Heart left ventricle (tissue), 16 donors: ENCODE measurements at regions of chr18 and their contacts with region 1.

Region 1: DNA sequence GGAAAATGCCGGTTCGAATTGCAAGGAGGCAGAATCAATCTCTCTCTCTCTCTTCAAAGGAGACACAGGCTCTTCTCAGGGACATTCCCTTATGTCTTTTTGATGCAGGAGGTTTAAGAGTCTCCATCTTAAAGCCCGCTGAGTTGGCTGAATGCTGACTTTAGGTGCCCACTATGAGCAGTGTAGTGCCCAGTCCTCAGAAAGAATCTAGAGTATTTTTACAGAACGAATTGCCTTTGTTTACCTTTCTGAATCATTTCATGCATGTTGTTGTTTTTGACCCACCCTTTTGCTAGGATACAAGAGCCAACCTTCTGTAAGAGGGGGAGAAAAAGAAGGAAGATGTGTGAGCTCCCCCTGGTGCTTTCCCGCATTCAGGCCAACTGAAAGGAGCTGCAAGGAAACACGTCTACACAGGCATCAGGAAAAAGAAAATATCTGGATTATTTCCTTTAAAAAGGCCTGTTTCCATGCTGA is 193.5 kb upstream of the TCF4 start:
- DNase-seq: peak in 4 of 5 donors; percentile 33 to 58 (median 48)
- ATAC-seq: peak in 3 of 4 donors; percentile 65 to 75 (median 75)
- H3K4me3 ChIP-seq: no peak overlapping the region
- H3K27ac ChIP-seq: peak overlapping the region; percentile 48 to 95 (median 88)
- H3K4me1 ChIP-seq: peaks cover 0 to 30% (median 20%) of the 10 kb centered on the region in 12 donors
- H3K27me3 ChIP-seq: peaks cover 0 to 3% (median 0%) of the 10 kb centered on the region in 9 donors
- CTCF ChIP-seq: peak; percentile 31 to 75 (median 68)
- POLR2A ChIP-seq: no peak

Region 2: GRCh38 chr18:55234366-55235093 is 547.0 kb before region 1 on chr18:
- intact Hi-C with region 1: loop called in 8 of 10 experiments (anchors 2 to 10 kb)
- DNase-seq: peak; percentile 67 to 79 (median 75)
- ATAC-seq: peak; percentile 76 to 92 (median 88)
- H3K4me3 ChIP-seq: no peak overlapping the region
- H3K27ac ChIP-seq: peak overlapping the region in 11 of 12 donors; percentile 47 to 77 (median 62)
- H3K4me1 ChIP-seq: peaks cover 0 to 55% (median 37%) of the 10 kb centered on the region in 12 donors
- H3K27me3 ChIP-seq: no peaks in the 10 kb centered on the region
- CTCF ChIP-seq: peak; percentile 60 to 87 (median 79)
- POLR2A ChIP-seq: no peak

Region 3: DNA sequence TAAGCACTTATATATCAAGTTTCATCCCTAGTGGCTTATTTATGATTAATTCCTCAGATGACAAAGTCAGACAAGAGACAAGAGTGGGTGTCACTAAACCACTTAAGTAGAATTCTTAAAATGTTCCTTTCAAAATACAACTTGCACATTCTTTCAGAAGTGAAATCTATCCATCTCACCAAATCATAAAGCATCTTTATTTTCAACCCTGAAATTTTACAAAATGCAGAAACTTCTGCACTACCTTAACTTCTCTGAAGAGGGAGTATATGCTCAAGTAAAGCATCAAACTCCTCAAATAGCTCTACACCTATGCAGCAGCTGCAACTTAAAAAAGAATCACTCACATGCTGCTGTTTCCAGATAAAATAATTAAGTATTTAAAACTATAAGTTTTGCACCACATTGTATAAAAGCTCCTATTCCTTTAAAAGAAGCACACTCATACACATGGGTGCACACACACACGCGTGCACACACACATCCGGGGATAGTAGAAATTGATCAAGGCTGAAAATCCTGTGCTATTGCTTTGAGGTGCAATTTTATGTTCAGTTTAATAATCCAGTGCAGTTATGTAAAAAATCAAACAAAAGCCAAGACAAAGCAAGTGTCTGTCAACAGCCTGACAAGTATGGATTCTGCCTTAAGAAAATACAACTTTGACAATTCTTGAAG is 438.0 kb before region 1 on chr18:
- intact Hi-C with region 1: loop called in 8 of 10 experiments (anchors 2 to 10 kb)
- DNase-seq: no peak
- ATAC-seq: peak in 3 of 4 donors; percentile 56 to 64 (median 57)
- H3K4me3 ChIP-seq: no peak overlapping the region
- H3K27ac ChIP-seq: peak overlapping the region in 2 of 12 donors; percentile 4 to 21
- H3K4me1 ChIP-seq: peaks cover 0 to 61% (median 17%) of the 10 kb centered on the region in 12 donors
- H3K27me3 ChIP-seq: no peaks in the 10 kb centered on the region
- CTCF ChIP-seq: peak; percentile 38 to 74 (median 58)
- POLR2A ChIP-seq: no peak

Region 4: DNA sequence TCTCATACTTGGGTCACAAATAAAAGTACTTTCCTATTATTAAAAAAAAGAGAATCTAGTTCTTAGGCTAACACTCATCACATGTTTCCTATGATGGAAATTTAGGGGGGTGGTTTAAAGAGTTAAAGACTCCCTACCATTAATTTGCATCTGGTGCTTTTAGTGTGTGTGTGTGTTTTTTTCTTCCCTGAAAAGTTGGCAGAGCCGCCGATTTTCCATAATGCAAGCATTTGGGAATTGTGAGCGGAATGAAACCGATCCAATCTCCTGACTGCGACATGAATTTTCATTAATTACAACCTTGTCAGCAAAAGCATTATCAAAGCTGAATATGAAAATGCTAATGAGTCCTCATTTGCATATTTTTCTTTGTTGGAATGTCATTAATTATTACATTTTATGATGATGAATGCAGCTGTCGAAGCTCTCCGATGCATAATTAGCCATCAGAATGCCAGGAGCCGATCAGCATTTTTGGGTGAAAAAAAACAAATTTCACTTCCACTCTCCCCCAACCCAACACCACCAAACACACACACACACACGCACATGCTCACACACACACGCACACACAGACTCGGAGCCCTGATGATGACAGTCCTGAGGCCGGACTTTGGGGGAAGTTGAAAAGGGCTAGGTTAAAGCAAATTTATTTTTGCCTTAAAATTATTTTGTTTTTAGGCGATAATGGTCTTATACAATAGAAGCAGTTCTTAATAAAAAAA is 358.9 kb before region 1 on chr18:
- intact Hi-C with region 1: loop called in 8 of 10 experiments (anchors 2 to 10 kb)
- DNase-seq: peak; percentile 47 to 78 (median 62)
- ATAC-seq: peak in 3 of 4 donors; percentile 16 to 67 (median 65)
- H3K4me3 ChIP-seq: peak overlapping the region; percentile 5 to 56 (median 44)
- H3K27ac ChIP-seq: peak overlapping the region; percentile 33 to 91 (median 84)
- H3K4me1 ChIP-seq: peaks cover 0 to 36% (median 9%) of the 10 kb centered on the region in 12 donors
- H3K27me3 ChIP-seq: no peaks in the 10 kb centered on the region
- CTCF ChIP-seq: no peak
- POLR2A ChIP-seq: no peak

Region 5: GRCh38 chr18:55731594-55732042 is 49.9 kb before region 1 on chr18:
- intact Hi-C with region 1: loop called in 1 of 10 experiments (anchors 10 kb)
- DNase-seq: no peak
- ATAC-seq: peak in 2 of 4 donors; percentile 43 to 51
- H3K4me3 ChIP-seq: no peak overlapping the region
- H3K27ac ChIP-seq: peak overlapping the region; percentile 12 to 81 (median 58)
- H3K4me1 ChIP-seq: peaks cover 0 to 19% (median 8%) of the 10 kb centered on the region in 12 donors
- H3K27me3 ChIP-seq: no peaks in the 10 kb centered on the region
- CTCF ChIP-seq: no peak
- POLR2A ChIP-seq: no peak

Region 6: DNA sequence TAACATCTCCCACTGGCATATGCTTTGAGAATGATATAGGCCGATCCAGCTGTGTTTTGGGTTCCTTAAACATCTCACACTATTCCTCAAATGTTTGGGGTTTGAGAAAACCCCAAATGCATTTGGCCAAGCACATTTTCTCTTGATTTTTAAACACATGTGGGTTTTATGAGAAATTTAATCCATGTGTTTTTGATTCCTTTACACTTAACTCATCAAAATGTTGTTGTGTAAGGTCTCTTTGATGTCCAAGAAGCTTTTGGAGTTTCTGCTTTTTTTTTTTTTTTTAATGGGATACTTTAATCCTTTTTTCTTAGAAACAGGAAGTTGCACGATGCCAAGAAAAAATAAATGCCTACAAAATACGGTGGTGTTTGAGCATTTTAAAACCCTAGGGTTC is 146.3 kb after region 1 on chr18:
- intact Hi-C with region 1: no loop called
- DNase-seq: no peak
- ATAC-seq: no peak
- H3K4me3 ChIP-seq: no peak overlapping the region
- H3K27ac ChIP-seq: no peak overlapping the region
- H3K4me1 ChIP-seq: no peaks in the 10 kb centered on the region
- H3K27me3 ChIP-seq: no peaks in the 10 kb centered on the region
- CTCF ChIP-seq: no peak
- POLR2A ChIP-seq: no peak

Region 7: DNA sequence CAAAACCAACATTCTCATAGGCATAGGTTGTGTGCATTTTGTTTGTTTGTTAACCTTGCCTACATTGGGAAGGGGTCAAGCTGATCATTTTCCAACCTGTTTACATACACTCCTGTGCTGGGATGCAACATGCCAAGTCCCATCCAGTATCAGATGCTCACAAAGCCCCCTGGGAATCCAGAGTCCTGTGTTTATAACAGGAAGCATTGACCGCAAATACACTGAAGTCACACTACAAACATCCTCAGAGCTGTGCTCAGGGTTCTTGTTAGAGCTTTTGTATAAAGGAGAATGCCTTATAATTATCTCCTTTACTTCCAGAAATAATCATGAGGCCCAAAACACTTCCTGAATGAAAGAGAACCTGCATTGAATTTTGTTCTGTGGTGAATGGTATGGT is 295.2 kb after region 1 on chr18:
- intact Hi-C with region 1: loop called in 2 of 10 experiments (anchors 5 to 10 kb)
- DNase-seq: no peak
- ATAC-seq: no peak
- H3K4me3 ChIP-seq: no peak overlapping the region
- H3K27ac ChIP-seq: no peak overlapping the region
- H3K4me1 ChIP-seq: peaks cover 0 to 16% (median under 1%) of the 10 kb centered on the region in 12 donors
- H3K27me3 ChIP-seq: no peaks in the 10 kb centered on the region
- CTCF ChIP-seq: no peak
- POLR2A ChIP-seq: no peak

Region 8: GRCh38 chr18:56321470-56321869 is 540.0 kb after region 1 on chr18:
- intact Hi-C with region 1: no loop called
- DNase-seq: peak; percentile 57 to 79 (median 70)
- ATAC-seq: peak; percentile 47 to 86 (median 68)
- H3K4me3 ChIP-seq: no peak overlapping the region
- H3K27ac ChIP-seq: peak overlapping the region in 4 of 12 donors; percentile 2 to 60 (median 29)
- H3K4me1 ChIP-seq: peaks cover 0 to 30% (median 14%) of the 10 kb centered on the region in 12 donors
- H3K27me3 ChIP-seq: no peaks in the 10 kb centered on the region
- CTCF ChIP-seq: no peak
- POLR2A ChIP-seq: no peak